ENCODE measurements at regions of chr3 and their contacts with region 1.

Region 1: GRCh38 chr3:131260525-131260924 is 121.0 kb upstream of the NUDT16 start:
- DNase-seq: no peak
- H3K4me3 ChIP-seq: no peak overlapping the region
- H3K27ac ChIP-seq: no peak overlapping the region
- H3K4me1 ChIP-seq: no peaks in the 10 kb centered on the region
- H3K27me3 ChIP-seq: no peaks in the 10 kb centered on the region
- CTCF ChIP-seq: no peak

Region 2: DNA sequence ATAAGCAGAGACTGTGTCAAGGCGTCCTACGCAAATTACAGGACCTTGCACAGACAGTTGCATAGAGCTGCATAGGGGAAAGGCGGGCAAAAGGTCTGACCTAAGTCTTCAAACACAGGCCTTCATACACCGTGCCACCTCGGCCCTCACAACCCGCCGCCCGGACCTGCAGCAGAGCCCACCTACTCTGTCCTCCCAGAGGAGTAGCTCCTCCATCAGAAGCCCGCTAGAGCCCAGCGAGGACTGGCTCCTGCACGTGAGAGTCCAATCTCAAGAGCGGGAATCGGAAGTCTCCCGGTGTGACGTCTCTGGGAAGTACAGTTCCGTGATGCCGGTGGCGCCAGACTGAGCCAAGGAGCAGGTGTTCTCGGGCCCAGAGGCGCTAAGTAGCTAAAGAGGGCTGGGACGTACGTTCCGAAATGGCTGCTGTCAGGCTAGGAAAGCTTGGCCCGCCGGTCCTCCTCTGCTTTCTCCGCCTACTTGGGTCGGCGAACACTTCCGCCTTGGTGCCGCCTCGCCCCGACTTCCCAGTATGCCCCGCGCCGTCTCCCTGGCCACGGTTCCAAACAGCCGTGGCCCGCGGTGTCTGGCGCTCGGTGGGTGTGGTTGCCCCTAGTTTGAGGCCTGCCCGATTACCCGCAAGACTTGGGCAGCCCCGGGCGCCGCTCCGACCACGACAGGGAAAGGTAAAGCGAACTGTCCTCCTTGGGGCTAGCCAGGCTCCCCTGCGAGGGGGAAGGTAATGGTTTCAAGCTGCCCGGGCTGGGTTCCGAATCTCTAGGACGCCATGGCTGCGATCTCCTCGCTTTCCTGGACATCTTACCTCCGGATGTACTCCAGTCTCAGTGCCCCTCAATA is 234.0 kb before region 1 on chr3 and contains the starts of genes ASTE1 and NEK11:
- CTCF ChIA-PET with region 1: no interaction called
- dilution Hi-C with region 1: no loop called
- in situ Hi-C with region 1: no loop called
- intact Hi-C with region 1: no loop called
- DNase-seq: peak; percentile 87
- H3K4me3 ChIP-seq: peak within 1 kb of the TSS; percentile 68 to 81 (median 78)
- H3K27ac ChIP-seq: peak within 1 kb of the TSS; percentile 97
- H3K4me1 ChIP-seq: peaks cover 4% of the 10 kb centered on the region
- H3K27me3 ChIP-seq: no peaks in the 10 kb centered on the region
- CTCF ChIP-seq: peak in 1 of 2 donors; percentile 4
- total RNA-seq, gene ASTE1: 4.4 to 6.3 TPM
- total RNA-seq, gene NEK11: 7.7 to 20.2 TPM

Region 3: GRCh38 chr3:131162516-131162915 is 98.0 kb before region 1 on chr3:
- CTCF ChIA-PET with region 1: no interaction called
- dilution Hi-C with region 1: loop called (anchors 5 kb)
- in situ Hi-C with region 1: no loop called
- intact Hi-C with region 1: no loop called
- DNase-seq: no peak
- H3K4me3 ChIP-seq: no peak overlapping the region
- H3K27ac ChIP-seq: no peak overlapping the region
- H3K4me1 ChIP-seq: no peaks in the 10 kb centered on the region
- H3K27me3 ChIP-seq: no peaks in the 10 kb centered on the region
- CTCF ChIP-seq: no peak

Region 4: DNA sequence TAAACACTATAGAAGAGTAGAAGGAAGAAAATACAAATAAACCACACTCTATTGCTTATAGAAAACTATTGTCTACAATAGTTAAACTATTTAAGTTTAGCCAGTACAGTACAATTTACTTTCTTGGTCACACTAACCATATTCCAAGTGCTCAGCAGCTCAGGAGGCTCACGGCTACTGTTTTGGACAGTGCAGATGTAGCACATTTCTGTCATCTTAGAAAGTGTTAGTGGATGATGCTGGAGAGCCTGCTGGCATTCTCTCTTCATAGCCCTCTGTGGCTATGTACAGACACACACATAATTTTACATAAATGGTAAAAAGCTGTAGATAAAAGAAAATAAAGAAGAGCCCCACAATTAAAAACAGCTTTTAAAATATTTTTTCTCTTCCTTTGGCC is 144.9 kb after region 1 on chr3:
- CTCF ChIA-PET with region 1: no interaction called
- dilution Hi-C with region 1: loop called (anchors 5 kb)
- in situ Hi-C with region 1: no loop called
- intact Hi-C with region 1: no loop called
- DNase-seq: no peak
- H3K4me3 ChIP-seq: no peak overlapping the region
- H3K27ac ChIP-seq: no peak overlapping the region
- H3K4me1 ChIP-seq: peaks cover 15% of the 10 kb centered on the region
- H3K27me3 ChIP-seq: no peaks in the 10 kb centered on the region
- CTCF ChIP-seq: no peak

Region 5: DNA sequence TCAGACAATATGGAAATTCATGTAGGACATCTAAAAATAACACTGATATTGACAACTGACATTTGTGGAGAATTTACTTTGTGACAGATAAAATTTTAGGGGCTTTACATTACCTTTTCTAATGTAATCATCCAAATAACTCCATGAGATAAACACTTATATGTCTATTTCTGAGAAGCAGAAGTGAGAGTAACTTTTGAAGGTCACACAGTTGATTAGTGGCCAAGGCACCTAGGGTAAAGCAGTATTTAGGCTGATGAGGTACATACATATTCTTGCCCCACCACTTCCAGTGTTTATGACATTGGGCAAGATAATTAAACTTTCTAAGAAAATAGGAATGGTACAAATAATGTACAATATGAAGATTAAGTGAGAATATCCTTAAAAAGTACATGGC is 525.9 kb after region 1 on chr3:
- CTCF ChIA-PET with region 1: no interaction called
- dilution Hi-C with region 1: no loop called
- in situ Hi-C with region 1: no loop called
- intact Hi-C with region 1: no loop called
- DNase-seq: no peak
- H3K4me3 ChIP-seq: no peak overlapping the region
- H3K27ac ChIP-seq: no peak overlapping the region
- H3K4me1 ChIP-seq: no peaks in the 10 kb centered on the region
- H3K27me3 ChIP-seq: no peaks in the 10 kb centered on the region
- CTCF ChIP-seq: no peak

Region 6: DNA sequence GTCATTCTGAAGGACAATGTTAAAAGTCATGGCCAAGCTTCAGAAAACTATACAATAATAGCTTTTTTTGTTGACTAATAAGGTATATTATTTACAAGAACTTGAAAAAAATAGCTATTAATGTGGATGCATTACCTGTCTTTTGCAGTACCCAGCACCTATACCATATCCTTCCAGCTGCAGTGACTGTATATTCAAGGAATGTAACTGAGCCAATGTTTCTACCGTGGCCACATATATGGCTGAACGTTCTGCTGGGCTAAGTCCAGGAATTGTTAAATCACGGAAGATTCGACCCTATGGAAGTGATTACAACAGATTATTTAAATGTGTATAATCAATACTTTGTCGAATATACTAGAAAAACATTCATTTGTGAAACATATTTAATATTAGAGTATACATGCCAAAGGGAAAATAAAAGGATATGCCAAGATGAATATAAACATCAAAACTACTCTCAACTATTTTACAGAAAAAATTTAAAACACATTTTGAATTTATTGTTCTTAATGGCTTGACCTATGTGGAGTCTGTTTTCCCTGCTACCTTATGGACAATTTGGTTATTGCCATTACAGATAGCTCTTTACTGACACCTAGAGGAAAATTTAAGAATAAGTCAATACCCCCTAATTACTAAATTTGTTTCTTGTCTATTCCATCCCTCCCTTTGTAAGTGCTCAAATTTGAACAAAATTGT is 1381.5 kb after region 1 on chr3:
- CTCF ChIA-PET with region 1: no interaction called
- dilution Hi-C with region 1: no loop called
- in situ Hi-C with region 1: no loop called
- intact Hi-C with region 1: no loop called
- DNase-seq: no peak
- H3K4me3 ChIP-seq: no peak overlapping the region
- H3K27ac ChIP-seq: no peak overlapping the region
- H3K4me1 ChIP-seq: peaks cover 17% of the 10 kb centered on the region
- H3K27me3 ChIP-seq: no peaks in the 10 kb centered on the region
- CTCF ChIP-seq: peak; percentile 54 to 72